K562 (cell line): ENCODE measurements at regions of chr1 and their contacts with region 1.

Region 1: DNA sequence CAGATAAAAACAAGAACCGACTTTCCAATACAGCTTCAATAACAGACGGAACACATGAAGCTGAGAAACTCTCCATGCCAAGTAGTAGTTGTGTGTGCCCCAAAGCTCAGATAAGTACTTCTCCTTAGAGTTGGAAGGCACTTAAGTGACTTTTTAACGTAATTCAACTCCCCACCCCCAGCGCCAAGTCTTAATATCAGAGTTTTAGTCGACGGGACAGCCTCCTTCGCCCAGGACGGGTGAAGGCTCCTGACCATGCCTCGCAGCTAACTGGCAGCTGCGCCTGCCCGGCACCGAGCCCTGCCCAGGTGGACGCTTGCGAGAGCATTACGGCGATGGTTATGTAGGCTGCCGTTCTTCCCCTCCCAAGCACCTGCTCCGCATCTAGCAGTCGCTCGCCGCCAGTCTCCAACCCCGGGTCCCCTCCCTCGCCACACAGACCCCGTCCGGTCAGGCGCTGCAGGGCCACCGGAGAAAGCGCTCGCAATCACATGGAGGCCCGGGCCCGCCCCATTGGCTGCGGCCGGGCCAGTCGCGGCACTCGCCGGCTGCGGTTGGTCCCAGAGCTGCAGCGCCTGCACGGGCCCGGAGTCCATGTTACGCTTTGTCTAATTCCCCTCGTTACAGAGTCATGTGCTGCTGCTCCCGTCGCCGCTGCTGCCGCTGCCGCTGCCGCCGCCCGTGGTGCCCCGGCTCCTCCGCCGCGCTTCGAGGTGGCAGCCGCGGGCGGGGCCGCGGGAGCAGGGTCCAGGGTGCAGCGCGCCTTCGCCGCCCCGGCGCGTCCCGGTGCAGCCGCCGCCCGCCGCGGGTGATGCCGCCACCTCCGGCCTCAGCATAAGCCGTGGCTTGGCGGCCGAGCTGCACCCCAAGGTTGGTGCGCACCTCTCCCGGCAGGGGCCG is at the start of gene LRRC8D:
- DNase-seq: peak; percentile 85 to 89 (median 88)
- ATAC-seq: peak; percentile 81
- H3K4me3 ChIP-seq: peak within 1 kb of the TSS; percentile 77
- H3K27ac ChIP-seq: peak within 1 kb of the TSS; percentile 85
- H3K4me1 ChIP-seq: peaks cover 18 to 22% of the 10 kb centered on the region in 2 experiments; a peak in 4 of 5 replicates
- H3K27me3 ChIP-seq: no peaks in the 10 kb centered on the region
- CTCF ChIP-seq: 0 out of 6 replicates have a peak, but pooled peaks of 1 of the 3 experiments have one; percentile 6
- EP300 ChIP-seq: no peak
- POLR2A ChIP-seq: peak; percentile 62
- RAD21 ChIP-seq: no peak
- polyA plus RNA-seq, gene LRRC8D: 3.4 to 7.8 TPM

Region 2: GRCh38 chr1:89538361-89538760 is 282.3 kb before region 1 on chr1:
- CTCF ChIA-PET with region 1: no interaction called
- POLR2A ChIA-PET with region 1: no interaction called
- in situ Hi-C with region 1: no loop called
- intact Hi-C with region 1: loop called (anchors 5 kb)
- DNase-seq: peak in 2 of 4 experiments; percentile 73 to 79
- ATAC-seq: peak; percentile 59
- H3K4me3 ChIP-seq: no peak overlapping the region
- H3K27ac ChIP-seq: peak overlapping the region; percentile 73
- H3K4me1 ChIP-seq: peaks cover 14 to 75% of the 10 kb centered on the region in 2 experiments
- H3K27me3 ChIP-seq: no peaks in the 10 kb centered on the region
- CTCF ChIP-seq: no peak
- EP300 ChIP-seq: peak; percentile 86
- POLR2A ChIP-seq: no peak
- RAD21 ChIP-seq: no peak

Region 3: GRCh38 chr1:89833183-89834082 is 12.8 kb after region 1 on chr1:
- CTCF ChIA-PET with region 1: no interaction called
- POLR2A ChIA-PET with region 1: interaction called, 21 read pairs
- in situ Hi-C with region 1: no loop called
- intact Hi-C with region 1: no loop called
- DNase-seq: no peak
- ATAC-seq: no peak; the same call in 2 of the 3 replicates
- H3K4me3 ChIP-seq: no peak overlapping the region
- H3K27ac ChIP-seq: peak overlapping the region; percentile 14; the same call in 1 of the 3 replicates
- H3K4me1 ChIP-seq: peaks cover 10 to 61% of the 10 kb centered on the region in 2 experiments
- H3K27me3 ChIP-seq: no peaks in the 10 kb centered on the region
- CTCF ChIP-seq: no peak
- EP300 ChIP-seq: no peak
- POLR2A ChIP-seq: no peak
- RAD21 ChIP-seq: no peak

Region 4: DNA sequence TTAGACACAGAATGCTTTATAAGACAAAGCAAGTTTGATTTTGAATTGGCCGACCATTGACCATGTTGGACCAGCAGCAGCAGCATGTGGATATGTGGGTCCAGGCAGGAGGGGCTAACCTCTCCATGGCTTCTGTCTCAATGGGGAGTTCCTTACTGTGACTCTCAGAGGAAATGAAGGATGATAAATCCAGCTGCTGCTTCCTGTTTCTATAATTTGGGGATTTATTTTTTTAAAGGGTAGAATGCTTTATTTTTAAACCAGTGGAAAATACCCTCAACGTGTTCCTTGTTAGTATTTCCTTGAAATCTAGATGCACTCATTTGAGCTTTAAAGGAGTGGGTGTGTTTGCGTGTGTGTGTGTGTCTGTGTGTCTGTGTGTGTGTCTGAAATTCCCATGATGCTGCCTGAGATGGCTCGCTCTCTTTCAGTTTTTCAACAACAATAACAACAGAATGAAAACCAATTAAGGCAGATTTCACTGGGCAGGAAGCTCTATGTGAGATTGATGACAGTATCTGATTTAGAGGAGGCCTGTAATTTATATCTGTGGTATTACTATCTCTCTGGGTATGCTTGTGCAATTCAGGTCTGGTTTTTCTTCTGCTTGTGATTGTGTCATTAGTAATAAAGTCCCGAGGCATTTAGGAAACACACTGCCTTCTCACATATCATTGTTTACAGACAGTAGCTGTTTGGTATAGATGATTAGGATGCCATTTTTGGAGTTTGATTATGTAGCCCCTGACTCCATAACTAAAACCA is 88.2 kb after region 1 on chr1:
- CTCF ChIA-PET with region 1: no interaction called
- POLR2A ChIA-PET with region 1: interaction called, 3 read pairs
- in situ Hi-C with region 1: no loop called
- intact Hi-C with region 1: loop called (anchors 2 kb)
- DNase-seq: peak in 1 of 4 experiments; percentile 35
- ATAC-seq: no peak
- H3K4me3 ChIP-seq: no peak overlapping the region
- H3K27ac ChIP-seq: peak overlapping the region; percentile 85
- H3K4me1 ChIP-seq: peaks cover 30 to 87% of the 10 kb centered on the region in 2 experiments
- H3K27me3 ChIP-seq: no peaks in the 10 kb centered on the region
- CTCF ChIP-seq: no peak
- EP300 ChIP-seq: peak; percentile 28; the same call in 1 of the 2 replicates
- POLR2A ChIP-seq: no peak
- RAD21 ChIP-seq: no peak; a peak in 1 of 4 replicates

Region 5: DNA sequence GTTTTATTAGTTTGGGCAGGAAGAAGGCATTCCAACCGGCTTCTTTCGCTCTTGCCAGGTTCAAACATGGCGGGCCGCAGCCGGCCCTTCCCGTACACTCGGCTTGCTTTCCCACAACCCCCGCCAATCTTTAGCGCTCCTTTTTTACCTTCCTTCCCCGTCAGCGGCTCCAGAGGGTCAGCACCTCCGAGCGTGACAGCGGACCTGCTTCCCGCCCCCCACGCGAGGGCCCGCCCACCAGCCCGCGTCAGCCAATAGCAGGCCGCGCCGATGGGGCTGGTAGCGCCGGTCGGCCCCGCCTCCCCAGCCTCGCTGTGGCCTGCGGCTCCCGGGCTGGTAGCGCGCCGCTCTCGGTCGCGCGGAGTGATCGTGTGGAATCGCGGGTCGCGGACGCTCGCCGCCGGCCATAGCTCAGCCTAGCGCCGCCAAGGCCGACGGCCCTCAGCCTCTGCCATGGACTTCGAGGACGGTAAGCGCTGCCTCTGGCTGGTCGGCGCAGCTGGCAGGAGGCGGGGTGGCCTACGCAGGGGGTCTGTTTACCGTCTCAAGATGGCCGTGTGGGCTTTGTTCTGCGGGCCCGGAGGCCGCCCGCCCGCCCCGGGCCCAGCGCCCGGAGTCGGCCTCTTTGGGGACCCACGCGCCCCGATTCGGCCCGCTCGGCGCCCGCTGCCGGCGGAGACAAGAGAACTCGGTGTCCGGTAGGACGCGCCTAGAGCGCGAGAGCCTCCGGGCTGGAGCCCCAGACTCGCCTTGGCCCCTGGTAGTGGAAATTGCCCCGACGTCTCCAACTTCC is 174.3 kb after region 1 on chr1 and contains the start of gene ZNF326:
- CTCF ChIA-PET with region 1: no interaction called
- POLR2A ChIA-PET with region 1: interaction called, 8 read pairs
- in situ Hi-C with region 1: no loop called
- intact Hi-C with region 1: loop called (anchors 2 kb)
- DNase-seq: peak; percentile 97 to 99 (median 99)
- ATAC-seq: peak; percentile 97
- H3K4me3 ChIP-seq: peak within 1 kb of the TSS; percentile 83
- H3K27ac ChIP-seq: peak within 1 kb of the TSS; percentile 94
- H3K4me1 ChIP-seq: peaks cover 21 to 30% of the 10 kb centered on the region in 2 experiments
- H3K27me3 ChIP-seq: no peaks in the 10 kb centered on the region
- CTCF ChIP-seq: peak in 2 of 3 experiments; percentile 2 to 7; a peak in 1 of 6 replicates
- EP300 ChIP-seq: no peak
- POLR2A ChIP-seq: peak; percentile 97
- RAD21 ChIP-seq: no peak
- polyA plus RNA-seq, gene ZNF326: 7.3 to 7.7 TPM

Region 6: GRCh38 chr1:90325168-90325567 is 504.5 kb after region 1 on chr1:
- CTCF ChIA-PET with region 1: no interaction called
- POLR2A ChIA-PET with region 1: no interaction called
- in situ Hi-C with region 1: no loop called
- intact Hi-C with region 1: no loop called
- DNase-seq: no peak
- ATAC-seq: no peak
- H3K4me3 ChIP-seq: no peak overlapping the region
- H3K27ac ChIP-seq: no peak overlapping the region
- H3K4me1 ChIP-seq: no peaks in the 10 kb centered on the region
- H3K27me3 ChIP-seq: no peaks in the 10 kb centered on the region; a peak in 1 of 5 replicates
- CTCF ChIP-seq: no peak
- EP300 ChIP-seq: no peak
- POLR2A ChIP-seq: no peak
- RAD21 ChIP-seq: no peak